ENCODE measurements at regions of chr17 and their contacts with region 1.

Region 1: DNA sequence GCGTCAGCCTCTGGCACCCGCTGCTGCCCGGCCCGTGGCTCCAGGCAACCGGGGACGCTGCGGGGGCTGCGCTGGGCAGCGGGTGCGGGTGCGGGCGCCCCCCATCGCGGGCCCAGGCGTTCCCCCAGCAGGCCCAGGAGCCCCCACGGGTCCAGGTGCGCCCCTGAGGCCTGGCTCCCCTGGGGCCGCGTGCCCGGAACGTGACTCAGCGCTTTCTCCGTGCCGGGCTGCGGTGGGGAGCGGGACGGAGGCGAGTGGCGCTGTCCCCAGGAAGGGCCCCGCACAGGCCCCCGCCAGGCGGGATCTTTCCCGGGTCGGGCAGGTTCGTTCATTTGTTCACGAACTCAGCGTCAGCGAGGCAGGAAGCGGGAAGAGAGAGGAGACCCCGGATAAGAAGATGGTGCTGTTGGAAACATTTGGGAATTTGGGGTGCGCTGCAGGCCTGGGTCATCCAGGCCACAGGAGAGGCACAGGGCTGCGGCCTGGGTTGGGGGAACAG is 18.4 kb upstream of the EXOC7 start:
- DNase-seq: no peak
- ATAC-seq: peak; percentile 12 to 53 (median 22)
- H3K4me3 ChIP-seq: peak overlapping the region in 1 of 3 donors; percentile 14
- H3K27ac ChIP-seq: peak overlapping the region in 1 of 3 donors; percentile 33
- H3K4me1 ChIP-seq: peaks cover 0 to 3% (median 0%) of the 10 kb centered on the region in 4 donors
- H3K27me3 ChIP-seq: no peaks in the 10 kb centered on the region
- CTCF ChIP-seq: no peak
- POLR2A ChIP-seq: no peak

Region 2: DNA sequence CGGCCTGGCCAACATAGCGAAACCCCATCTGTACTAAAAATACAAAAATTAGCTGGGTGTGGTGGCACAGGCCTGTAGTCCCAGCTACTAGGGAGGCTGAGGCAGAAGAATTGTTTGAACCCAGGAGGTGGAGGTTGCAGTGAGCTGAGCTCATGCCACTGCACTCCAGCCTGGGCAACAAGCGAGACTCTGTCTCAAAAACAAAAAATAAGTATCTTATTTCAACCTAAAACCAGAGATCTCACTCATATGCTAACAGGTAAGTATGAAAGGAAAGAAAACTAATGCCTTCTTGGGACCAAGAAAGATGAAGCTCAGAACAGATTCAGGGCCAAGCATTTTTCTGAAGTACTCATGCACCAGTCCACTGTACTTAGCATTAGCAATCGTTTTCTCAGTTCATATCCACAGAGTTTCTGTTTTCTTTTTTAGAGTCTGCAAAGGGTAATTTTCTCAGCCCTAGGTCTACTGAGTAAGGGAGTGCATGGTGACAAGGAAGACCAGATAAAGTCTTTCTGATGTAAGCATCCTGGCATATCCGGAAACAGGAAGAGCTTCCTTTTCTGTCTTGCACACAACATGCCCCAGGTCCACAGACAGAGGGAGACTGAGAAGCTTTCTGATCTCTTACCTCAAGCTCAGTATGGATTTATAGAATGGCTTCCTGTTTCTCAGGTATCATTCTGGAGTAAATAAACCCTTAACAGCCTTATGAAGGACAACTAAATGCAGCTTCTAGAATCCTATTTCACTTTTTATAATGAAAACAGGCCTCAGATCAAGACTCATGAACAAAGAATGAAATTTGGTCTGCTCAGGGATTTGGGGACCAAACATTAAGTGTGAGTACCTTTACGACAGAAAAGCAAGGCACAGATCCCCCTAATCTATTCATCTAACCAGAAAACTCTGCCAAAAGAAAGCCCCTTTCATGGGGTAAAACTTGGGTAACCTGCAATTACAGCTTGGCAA is 57.8 kb after region 1 on chr17:
- intact Hi-C with region 1: loop called in 1 of 2 experiments (anchors 10 kb)
- DNase-seq: no peak
- ATAC-seq: peak; percentile 19 to 51 (median 28)
- H3K4me3 ChIP-seq: no peak overlapping the region
- H3K27ac ChIP-seq: no peak overlapping the region
- H3K4me1 ChIP-seq: peaks cover 0 to 6% (median 0%) of the 10 kb centered on the region in 4 donors
- H3K27me3 ChIP-seq: no peaks in the 10 kb centered on the region
- CTCF ChIP-seq: no peak
- POLR2A ChIP-seq: no peak

Region 3: GRCh38 chr17:76279742-76280287 is 157.8 kb after region 1 on chr17:
- intact Hi-C with region 1: loop called (anchors 5 kb)
- DNase-seq: peak in 1 of 3 donors; percentile 57
- ATAC-seq: no peak
- H3K4me3 ChIP-seq: no peak overlapping the region
- H3K27ac ChIP-seq: no peak overlapping the region
- H3K4me1 ChIP-seq: no peaks in the 10 kb centered on the region
- H3K27me3 ChIP-seq: no peaks in the 10 kb centered on the region
- CTCF ChIP-seq: no peak
- POLR2A ChIP-seq: no peak

Measured in right lobe of liver (tissue), 6 donors.